Aorta (tissue), 5 donors: ENCODE measurements at regions of chr14 and their contacts with region 1.

Region 1: GRCh38 chr14:104800771-104801519 is at the start of gene ZBTB42:
- DNase-seq: peak; percentile 75 to 89
- ATAC-seq: peak; percentile 3
- H3K4me3 ChIP-seq: peak within 1 kb of the TSS; percentile 49 to 55
- H3K27ac ChIP-seq: peak within 1 kb of the TSS; percentile 95
- H3K4me1 ChIP-seq: no peaks in the 10 kb centered on the region
- H3K27me3 ChIP-seq: no peaks in the 10 kb centered on the region
- total RNA-seq, gene ZBTB42: 4.4 to 4.7 TPM

Region 2: DNA sequence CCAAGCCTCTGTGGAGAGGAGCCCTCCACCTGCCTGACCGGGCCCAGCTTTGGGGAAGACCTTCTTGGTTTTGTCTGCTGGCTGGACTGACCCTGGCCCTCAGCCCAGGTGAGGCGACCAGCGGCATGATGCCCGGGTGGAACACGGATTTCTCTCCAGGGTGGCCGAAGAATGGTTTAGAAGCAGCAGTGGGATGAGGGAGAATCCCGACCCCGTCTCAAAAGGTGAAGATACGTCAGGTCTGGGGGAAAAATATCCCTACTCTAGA is 15.7 kb after region 1 on chr14:
- intact Hi-C with region 1: loop called in 1 of 2 experiments (anchors 1 kb)
- DNase-seq: no peak
- ATAC-seq: no peak
- H3K4me3 ChIP-seq: peak overlapping the region; percentile 30 to 35
- H3K27ac ChIP-seq: peak overlapping the region in 1 of 2 donors; percentile 38
- H3K4me1 ChIP-seq: no peaks in the 10 kb centered on the region
- H3K27me3 ChIP-seq: no peaks in the 10 kb centered on the region